ENCODE measurements at regions of chr6 and their contacts with region 1.

Region 1: DNA sequence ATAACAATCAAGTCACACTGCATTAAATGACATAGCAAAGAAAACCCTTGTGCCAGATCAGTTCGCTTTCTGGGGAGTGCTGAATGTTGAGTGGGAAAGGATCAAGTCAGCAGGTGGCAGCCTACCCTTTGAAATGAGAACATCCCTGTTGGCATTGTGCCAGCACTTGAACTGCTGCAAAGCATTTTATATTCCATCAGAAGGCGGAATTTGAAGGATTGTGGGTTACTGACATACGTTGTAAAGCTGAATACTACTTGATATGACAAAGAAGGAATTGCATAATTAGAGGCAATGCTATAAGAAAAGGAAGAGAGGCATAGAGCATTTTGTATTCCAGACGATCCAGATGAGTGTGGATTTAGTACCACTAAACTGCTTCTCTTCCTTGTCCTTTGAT is 26.5 kb downstream of the BCKDHB start:
- DNase-seq: peak; percentile 41
- H3K4me3 ChIP-seq: no peak overlapping the region
- H3K27ac ChIP-seq: no peak overlapping the region
- H3K4me1 ChIP-seq: no peaks in the 10 kb centered on the region
- H3K27me3 ChIP-seq: no peaks in the 10 kb centered on the region
- CTCF ChIP-seq: peak in 3 of 4 experiments; percentile 22 to 48 (median 47)
- POLR2A ChIP-seq: no peak

Region 2: DNA sequence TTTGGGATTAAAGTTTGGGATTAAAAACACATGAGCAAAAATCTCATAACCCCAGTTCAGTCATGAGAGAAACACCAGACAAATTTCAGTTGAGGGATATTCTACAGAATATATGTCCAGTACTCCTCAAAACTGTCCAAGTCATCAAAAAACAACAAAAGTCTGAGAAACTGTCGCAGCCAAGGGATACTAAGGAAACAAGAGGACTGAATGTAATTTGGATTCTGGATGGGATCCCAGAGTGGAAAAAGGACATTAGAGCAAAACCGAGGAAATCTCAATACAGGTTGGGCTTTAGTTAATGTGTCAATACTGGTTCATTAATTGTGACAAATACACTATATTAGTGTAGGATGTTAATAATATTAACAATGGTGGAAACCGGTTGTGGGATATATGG is 192.7 kb after region 1 on chr6:
- intact Hi-C with region 1: loop called (anchors 10 kb)
- DNase-seq: no peak
- H3K4me3 ChIP-seq: no peak overlapping the region
- H3K27ac ChIP-seq: no peak overlapping the region
- H3K4me1 ChIP-seq: no peaks in the 10 kb centered on the region
- H3K27me3 ChIP-seq: no peaks in the 10 kb centered on the region
- CTCF ChIP-seq: no peak
- POLR2A ChIP-seq: no peak

Region 3: DNA sequence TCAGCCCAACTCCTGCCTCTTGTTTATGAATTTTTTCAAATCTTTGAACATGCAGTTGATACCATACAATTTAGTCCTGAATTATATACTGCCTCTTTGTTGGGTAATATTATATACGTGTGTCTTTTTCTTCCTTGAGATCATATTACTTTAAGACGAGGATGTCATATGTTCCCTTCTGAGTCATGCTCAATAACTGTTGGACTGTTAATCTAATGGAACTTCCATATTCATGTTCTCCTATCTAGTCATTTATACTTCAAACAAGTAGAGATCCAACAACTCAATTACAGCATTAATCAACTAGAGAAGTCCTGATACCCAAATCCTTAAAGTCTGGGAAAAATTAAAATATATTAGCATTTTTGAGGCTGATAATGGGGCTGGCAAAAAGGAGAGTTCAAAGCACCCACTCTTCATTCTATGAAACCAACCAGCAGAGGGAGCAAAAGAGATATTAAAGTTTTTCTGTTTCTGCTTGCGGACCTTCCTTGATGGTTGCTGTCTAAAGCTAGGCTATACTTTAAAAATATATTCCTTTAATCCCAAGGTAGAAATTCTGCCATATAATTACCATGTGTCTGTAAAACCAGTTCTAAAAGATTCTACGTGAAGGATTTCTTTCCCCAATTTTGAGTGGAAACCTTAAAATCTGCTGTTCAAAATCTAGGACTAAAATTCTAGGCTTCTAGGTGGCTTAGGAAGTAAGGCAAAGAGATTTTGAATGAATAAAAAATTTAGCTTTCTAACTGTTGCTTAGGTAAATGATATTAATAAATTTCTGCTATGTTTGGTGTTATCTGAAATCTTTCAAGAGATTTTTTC is 472.4 kb after region 1 on chr6:
- intact Hi-C with region 1: loop called (anchors 10 kb)
- DNase-seq: no peak
- H3K4me3 ChIP-seq: no peak overlapping the region
- H3K27ac ChIP-seq: no peak overlapping the region
- H3K4me1 ChIP-seq: no peaks in the 10 kb centered on the region
- H3K27me3 ChIP-seq: no peaks in the 10 kb centered on the region
- CTCF ChIP-seq: peak in 3 of 4 experiments; percentile 50 to 57 (median 53)
- POLR2A ChIP-seq: no peak